ENCODE measurements at regions of chr2 and their contacts with region 1.

Region 1: GRCh38 chr2:168920504-168921157 is 19.5 kb downstream of the G6PC2 start:
- DNase-seq: peak in 1 of 2 experiments; percentile 49
- H3K4me3 ChIP-seq: no peak overlapping the region
- H3K4me1 ChIP-seq: no peaks in the 10 kb centered on the region
- H3K27me3 ChIP-seq: peaks cover 15% of the 10 kb centered on the region

Region 2: DNA sequence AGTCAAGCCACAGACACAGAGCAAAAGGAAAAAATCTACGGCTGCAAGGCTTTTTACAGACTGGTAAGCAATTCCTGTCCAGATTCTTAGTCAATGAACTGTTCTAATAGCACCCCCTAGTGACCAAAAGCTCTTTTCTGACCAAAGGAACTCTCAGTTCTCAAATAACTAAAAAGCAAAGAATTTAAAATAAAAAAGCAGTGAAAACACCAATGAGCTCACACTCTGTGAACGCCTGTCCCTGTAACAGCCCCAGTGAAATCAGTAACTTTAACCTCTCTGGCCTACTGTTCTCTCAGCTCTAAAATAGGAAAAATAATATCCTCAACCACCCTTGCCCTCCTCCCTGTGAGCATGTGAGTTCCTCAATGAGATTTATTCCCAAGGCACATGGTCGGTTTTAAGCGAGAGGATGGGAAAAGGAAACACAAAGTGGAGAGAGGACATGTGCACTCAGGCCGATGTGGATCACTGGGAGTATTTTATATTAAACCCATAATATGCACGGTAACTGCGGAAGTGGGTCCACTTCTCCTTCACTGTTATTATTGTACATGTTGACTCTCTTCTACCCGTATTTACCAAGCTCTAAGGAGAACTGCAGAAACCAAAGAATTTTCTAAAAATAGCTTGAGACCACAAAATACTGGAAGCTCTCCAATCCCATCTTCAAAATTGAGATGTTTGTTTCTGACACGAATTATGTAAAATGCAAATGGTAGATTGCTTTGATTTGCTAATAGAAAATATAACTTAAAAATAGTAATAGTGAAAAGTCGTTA is 801.7 kb before region 1 on chr2:
- in situ Hi-C with region 1: no loop called
- DNase-seq: peak; percentile 57 to 59
- H3K4me3 ChIP-seq: no peak overlapping the region
- H3K4me1 ChIP-seq: peaks cover 4% of the 10 kb centered on the region; the same call in 1 of the 2 replicates
- H3K27me3 ChIP-seq: no peaks in the 10 kb centered on the region

Region 3: DNA sequence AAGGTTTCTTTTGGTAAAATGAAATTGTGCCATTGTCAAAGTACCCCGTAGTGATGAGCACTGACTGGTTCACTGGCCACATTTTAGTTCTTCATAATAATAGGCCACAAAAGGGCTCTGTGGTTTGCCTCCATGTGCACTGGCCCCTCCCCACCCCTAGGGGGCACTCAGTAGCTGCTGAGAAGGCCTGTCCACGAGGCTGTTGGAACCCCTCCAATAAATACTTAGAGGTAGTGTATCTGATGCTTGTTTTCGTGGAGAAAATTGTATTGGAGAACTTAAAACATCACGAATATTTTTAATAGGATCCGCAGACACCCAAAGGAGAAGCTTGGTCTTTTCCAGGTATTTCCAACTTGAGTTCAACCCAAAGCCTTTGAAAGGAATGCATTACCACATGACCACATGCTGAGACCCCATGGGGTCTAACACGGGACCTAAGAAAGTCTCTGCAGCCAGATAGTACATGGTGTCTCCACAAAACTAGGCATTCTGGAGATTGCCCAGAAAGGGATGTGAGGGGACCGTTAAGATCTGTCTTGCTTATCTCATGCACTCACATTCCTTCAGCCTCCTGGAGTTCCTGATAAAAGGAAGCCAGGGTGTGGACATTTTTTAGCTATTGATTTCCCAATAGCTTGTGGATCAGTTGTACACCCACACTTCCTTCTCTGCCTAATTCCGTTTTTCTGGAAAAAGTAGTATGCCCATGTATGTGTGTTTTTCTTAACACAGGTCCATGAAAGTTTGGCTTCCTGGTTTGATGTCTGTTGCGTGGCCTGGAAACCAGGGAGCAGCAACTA is 146.7 kb before region 1 on chr2:
- in situ Hi-C with region 1: loop called (anchors 10 kb)
- DNase-seq: peak; percentile 37 to 78
- H3K4me3 ChIP-seq: no peak overlapping the region
- H3K4me1 ChIP-seq: no peaks in the 10 kb centered on the region
- H3K27me3 ChIP-seq: no peaks in the 10 kb centered on the region

Measured in HAP-1 (cell line).